Esophagus squamous epithelium (tissue), 5 donors: ENCODE measurements at regions of chr9 and their contacts with region 1.

Region 1: GRCh38 chr9:21852754-21853153 is 50.3 kb downstream of the MTAP start:
- DNase-seq: no peak
- H3K4me3 ChIP-seq: no peak overlapping the region
- H3K27ac ChIP-seq: no peak overlapping the region
- H3K4me1 ChIP-seq: peaks cover 0 to 14% (median 0%) of the 10 kb centered on the region in 3 donors
- H3K27me3 ChIP-seq: no peaks in the 10 kb centered on the region
- CTCF ChIP-seq: no peak
- POLR2A ChIP-seq: no peak

Region 2: GRCh38 chr9:21715408-21715807 is 137.3 kb before region 1 on chr9:
- intact Hi-C with region 1: no loop called
- DNase-seq: no peak
- H3K4me3 ChIP-seq: no peak overlapping the region
- H3K27ac ChIP-seq: no peak overlapping the region
- H3K4me1 ChIP-seq: peaks cover 0 to 28% (median 0%) of the 10 kb centered on the region in 3 donors
- H3K27me3 ChIP-seq: peaks cover 0 to 6% (median 0%) of the 10 kb centered on the region in 4 donors
- CTCF ChIP-seq: no peak
- POLR2A ChIP-seq: no peak

Region 3: GRCh38 chr9:21919377-21920362 is 66.9 kb after region 1 on chr9:
- intact Hi-C with region 1: loop called (anchors 10 kb)
- DNase-seq: no peak
- H3K4me3 ChIP-seq: no peak overlapping the region
- H3K27ac ChIP-seq: no peak overlapping the region
- H3K4me1 ChIP-seq: peaks cover 0 to 11% (median 0%) of the 10 kb centered on the region in 3 donors
- H3K27me3 ChIP-seq: no peaks in the 10 kb centered on the region
- CTCF ChIP-seq: no peak
- POLR2A ChIP-seq: no peak

Region 4: DNA sequence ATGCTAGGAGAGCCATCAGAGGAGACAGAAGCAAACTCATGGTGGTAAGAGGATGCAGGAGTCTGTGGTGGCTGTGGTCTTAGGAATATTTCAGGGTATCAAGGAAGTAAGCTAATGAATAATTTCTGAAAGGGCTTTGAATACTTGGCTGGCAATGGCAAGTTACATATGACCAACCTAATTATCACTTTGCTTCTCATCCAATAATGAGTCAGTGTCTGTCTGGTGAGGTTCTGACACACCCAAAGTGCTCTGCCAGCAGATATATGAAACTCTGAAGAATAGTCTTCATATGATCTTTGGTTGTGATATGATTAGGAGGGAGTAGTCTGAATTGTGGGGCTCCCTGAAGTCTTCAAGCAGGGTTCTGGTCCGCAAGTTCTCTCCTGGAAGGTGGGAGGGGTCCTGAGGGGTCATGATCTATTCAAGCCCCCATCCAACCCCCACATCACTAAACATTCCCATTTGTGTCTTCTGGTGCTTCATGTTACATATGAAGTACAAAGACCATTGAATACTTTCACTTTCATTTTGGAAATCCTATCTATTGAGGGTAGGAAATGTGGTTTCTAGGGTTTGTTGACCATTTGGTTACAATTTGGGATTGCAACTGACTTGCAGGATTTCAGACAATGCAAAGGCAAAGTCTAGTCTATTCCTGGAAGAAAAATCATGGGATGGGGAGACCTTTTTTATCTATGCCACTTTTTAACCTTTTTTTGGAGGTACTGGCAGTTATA is 356.3 kb after region 1 on chr9:
- intact Hi-C with region 1: no loop called
- DNase-seq: no peak
- H3K4me3 ChIP-seq: peak overlapping the region in 1 of 4 donors; percentile 22
- H3K27ac ChIP-seq: peak overlapping the region; percentile 5 to 58 (median 22)
- H3K4me1 ChIP-seq: peaks cover 4 to 48% (median 18%) of the 10 kb centered on the region in 3 donors
- H3K27me3 ChIP-seq: no peaks in the 10 kb centered on the region
- CTCF ChIP-seq: no peak
- POLR2A ChIP-seq: no peak